A673 (cell line): ENCODE measurements at regions of chr13 and their contacts with region 1.

Region 1: GRCh38 chr13:28792992-28793391 is 27.1 kb upstream of the MTUS2 start:
- DNase-seq: no peak
- H3K4me3 ChIP-seq: no peak overlapping the region
- H3K27ac ChIP-seq: no peak overlapping the region
- H3K4me1 ChIP-seq: peaks cover 16% of the 10 kb centered on the region
- H3K27me3 ChIP-seq: no peaks in the 10 kb centered on the region
- CTCF ChIP-seq: no peak

Region 2: DNA sequence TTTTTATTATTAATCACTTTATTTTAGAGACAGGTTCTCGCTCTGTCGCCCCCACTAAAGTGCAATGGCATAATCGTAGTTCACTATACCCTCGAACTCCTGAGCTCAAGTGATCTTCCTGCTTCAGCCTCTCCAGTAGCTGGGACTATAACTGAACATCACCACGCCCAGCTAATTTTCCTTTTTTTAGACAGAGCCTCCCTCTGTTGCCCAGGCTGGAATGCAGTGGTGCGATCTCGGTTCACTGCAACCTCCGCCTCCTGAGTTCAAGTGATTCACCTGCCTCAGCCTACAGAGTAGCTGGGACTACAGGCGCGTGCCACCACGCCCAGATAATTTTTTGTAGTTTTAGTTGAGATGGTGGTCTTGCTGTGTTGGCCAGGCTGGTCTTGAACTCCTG is 661.3 kb before region 1 on chr13:
- CTCF ChIA-PET with region 1: no interaction called
- POLR2A ChIA-PET with region 1: interaction called, 11 read pairs
- intact Hi-C with region 1: no loop called
- DNase-seq: no peak
- H3K4me3 ChIP-seq: no peak overlapping the region
- H3K27ac ChIP-seq: no peak overlapping the region
- H3K4me1 ChIP-seq: no peaks in the 10 kb centered on the region
- H3K27me3 ChIP-seq: no peaks in the 10 kb centered on the region
- CTCF ChIP-seq: no peak

Region 3: GRCh38 chr13:28540612-28541011 is 252.4 kb before region 1 on chr13:
- CTCF ChIA-PET with region 1: no interaction called
- POLR2A ChIA-PET with region 1: no interaction called
- intact Hi-C with region 1: loop called (anchors 10 kb)
- DNase-seq: no peak
- H3K4me3 ChIP-seq: no peak overlapping the region
- H3K27ac ChIP-seq: no peak overlapping the region
- H3K4me1 ChIP-seq: no peaks in the 10 kb centered on the region
- H3K27me3 ChIP-seq: no peaks in the 10 kb centered on the region
- CTCF ChIP-seq: no peak

Region 4: DNA sequence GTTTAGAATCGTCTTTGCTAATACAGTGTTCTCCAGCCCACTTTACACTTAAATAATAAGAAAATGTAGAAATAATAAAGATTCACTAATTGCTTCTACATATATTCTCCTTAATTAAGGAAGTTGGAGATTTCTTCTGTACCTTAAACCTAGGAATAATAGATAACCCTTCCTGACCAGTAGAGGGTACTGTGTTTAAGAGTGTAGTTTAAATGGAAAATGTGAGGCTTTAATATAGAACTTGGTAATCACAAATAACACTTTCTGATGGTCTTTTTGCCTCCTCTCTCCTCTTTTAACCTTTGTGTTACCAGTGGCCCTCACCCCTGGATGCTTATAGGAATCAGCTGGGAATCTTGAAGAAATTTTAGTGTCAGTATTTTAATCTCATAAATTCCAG is 113.4 kb before region 1 on chr13:
- CTCF ChIA-PET with region 1: interaction called, 8 read pairs
- POLR2A ChIA-PET with region 1: no interaction called
- intact Hi-C with region 1: loop called (anchors 2 kb)
- DNase-seq: peak; percentile 27
- H3K4me3 ChIP-seq: no peak overlapping the region
- H3K27ac ChIP-seq: no peak overlapping the region
- H3K4me1 ChIP-seq: no peaks in the 10 kb centered on the region
- H3K27me3 ChIP-seq: no peaks in the 10 kb centered on the region
- CTCF ChIP-seq: peak; percentile 61

Region 5: GRCh38 chr13:28922341-28922740 is 129.3 kb after region 1 on chr13:
- CTCF ChIA-PET with region 1: no interaction called
- POLR2A ChIA-PET with region 1: no interaction called
- intact Hi-C with region 1: no loop called
- DNase-seq: no peak
- H3K4me3 ChIP-seq: no peak overlapping the region
- H3K27ac ChIP-seq: no peak overlapping the region
- H3K4me1 ChIP-seq: no peaks in the 10 kb centered on the region
- H3K27me3 ChIP-seq: no peaks in the 10 kb centered on the region
- CTCF ChIP-seq: no peak

Region 6: GRCh38 chr13:29109987-29110386 is 317.0 kb after region 1 on chr13:
- CTCF ChIA-PET with region 1: interaction called, 12 read pairs
- POLR2A ChIA-PET with region 1: no interaction called
- intact Hi-C with region 1: no loop called
- DNase-seq: peak; percentile 2
- H3K4me3 ChIP-seq: no peak overlapping the region
- H3K27ac ChIP-seq: no peak overlapping the region
- H3K4me1 ChIP-seq: no peaks in the 10 kb centered on the region
- H3K27me3 ChIP-seq: no peaks in the 10 kb centered on the region
- CTCF ChIP-seq: no peak

Region 7: DNA sequence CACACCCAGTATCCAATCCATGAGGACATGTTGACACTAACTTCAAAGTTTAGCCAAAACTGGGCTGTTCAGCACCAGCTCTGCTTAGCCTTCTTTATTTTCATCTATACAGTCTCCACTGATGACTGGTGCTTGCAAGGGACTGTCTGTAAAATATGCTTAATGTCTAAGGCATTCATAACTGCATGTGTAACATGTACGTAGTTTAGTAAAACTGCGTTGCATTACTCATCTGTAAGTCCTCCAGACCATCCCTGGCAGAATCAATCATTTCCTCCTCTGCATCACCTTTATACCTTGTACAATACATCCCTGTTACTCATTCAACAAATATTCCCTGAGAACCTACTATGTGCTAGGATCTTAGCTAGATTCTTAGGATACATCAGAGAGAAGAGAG is 389.2 kb after region 1 on chr13:
- CTCF ChIA-PET with region 1: no interaction called
- POLR2A ChIA-PET with region 1: no interaction called
- intact Hi-C with region 1: no loop called
- DNase-seq: no peak
- H3K4me3 ChIP-seq: no peak overlapping the region
- H3K27ac ChIP-seq: no peak overlapping the region
- H3K4me1 ChIP-seq: no peaks in the 10 kb centered on the region
- H3K27me3 ChIP-seq: no peaks in the 10 kb centered on the region
- CTCF ChIP-seq: no peak